Left ventricle myocardium inferior (tissue), 1 donor: ENCODE measurements at regions of chr6 and their contacts with region 1.

Region 1: DNA sequence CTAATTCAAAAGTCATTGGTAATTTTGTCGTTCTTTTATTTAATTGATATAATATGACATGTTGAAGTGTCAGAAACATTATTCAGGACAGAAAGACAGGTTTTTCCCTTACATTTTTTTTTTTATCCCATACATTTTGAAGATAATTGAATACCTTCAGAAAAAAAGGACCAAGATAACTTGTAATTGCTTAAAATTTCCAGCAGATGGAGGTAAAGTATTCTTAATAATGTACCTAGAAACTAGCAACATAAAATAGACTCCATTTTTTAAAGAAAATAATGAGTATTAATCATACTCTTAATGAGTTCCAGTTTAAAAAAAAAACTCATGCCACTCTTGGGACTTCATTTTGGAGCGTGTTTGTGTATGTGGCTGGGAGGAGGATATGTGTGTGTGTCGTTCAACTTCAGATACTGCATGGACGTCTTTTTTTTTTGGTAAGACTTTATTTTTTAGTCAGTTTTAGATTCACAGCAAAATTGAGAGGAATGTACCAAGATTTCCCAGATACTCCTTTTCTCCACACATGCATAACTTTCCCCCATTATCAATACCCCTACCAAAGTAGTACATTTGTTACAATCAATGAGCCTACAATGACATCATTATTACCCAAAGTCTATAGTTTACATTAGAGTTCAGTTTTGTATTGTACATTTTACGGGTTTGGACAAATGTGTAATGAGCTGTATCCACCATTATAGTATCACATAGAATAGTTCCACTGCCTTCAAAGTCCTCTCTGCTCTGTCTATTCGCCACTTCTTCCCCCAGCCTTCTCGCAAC is 79.4 kb downstream of the ROS1 start:
- DNase-seq: no peak
- H3K4me3 ChIP-seq: no peak overlapping the region
- H3K27ac ChIP-seq: no peak overlapping the region
- H3K4me1 ChIP-seq: no peaks in the 10 kb centered on the region
- H3K27me3 ChIP-seq: peaks cover 8% of the 10 kb centered on the region
- CTCF ChIP-seq: peak; percentile 63

Region 2: GRCh38 chr6:117605169-117605826 is 259.0 kb after region 1 on chr6:
- intact Hi-C with region 1: loop called (anchors 2 kb)
- DNase-seq: no peak
- H3K4me3 ChIP-seq: no peak overlapping the region
- H3K27ac ChIP-seq: no peak overlapping the region
- H3K4me1 ChIP-seq: peaks cover 29% of the 10 kb centered on the region
- H3K27me3 ChIP-seq: peaks cover 12% of the 10 kb centered on the region
- CTCF ChIP-seq: peak; percentile 78